ENCODE measurements at regions of chr7 and their contacts with region 1.

Region 1: GRCh38 chr7:43834463-43835251 is 34.7 kb downstream of the MRPS24 start:
- DNase-seq: peak; percentile 51
- ATAC-seq: peak; percentile 75
- H3K4me3 Mint-ChIP-seq: peak overlapping the region; percentile 82
- H3K27ac Mint-ChIP-seq: peak overlapping the region; percentile 91
- H3K4me1 Mint-ChIP-seq: peaks cover 22% of the 10 kb centered on the region
- H3K27me3 Mint-ChIP-seq: peaks cover 4% of the 10 kb centered on the region

Region 2: GRCh38 chr7:43108255-43109011 is 726.2 kb before region 1 on chr7:
- CTCF ChIA-PET with region 1: no interaction called
- POLR2A ChIA-PET with region 1: no interaction called
- DNase-seq: peak; percentile 65
- ATAC-seq: peak; percentile 82
- H3K4me3 Mint-ChIP-seq: no peak overlapping the region
- H3K27ac Mint-ChIP-seq: no peak overlapping the region
- H3K4me1 Mint-ChIP-seq: no peaks in the 10 kb centered on the region
- H3K27me3 Mint-ChIP-seq: peaks cover 43% of the 10 kb centered on the region

Region 3: GRCh38 chr7:43454936-43455518 is 379.6 kb before region 1 on chr7:
- CTCF ChIA-PET with region 1: interaction called, 13 read pairs
- POLR2A ChIA-PET with region 1: no interaction called
- DNase-seq: no peak
- ATAC-seq: peak; percentile 67
- H3K4me3 Mint-ChIP-seq: no peak overlapping the region
- H3K27ac Mint-ChIP-seq: no peak overlapping the region
- H3K4me1 Mint-ChIP-seq: peaks cover 1% of the 10 kb centered on the region
- H3K27me3 Mint-ChIP-seq: peaks cover 10% of the 10 kb centered on the region

Region 4: DNA sequence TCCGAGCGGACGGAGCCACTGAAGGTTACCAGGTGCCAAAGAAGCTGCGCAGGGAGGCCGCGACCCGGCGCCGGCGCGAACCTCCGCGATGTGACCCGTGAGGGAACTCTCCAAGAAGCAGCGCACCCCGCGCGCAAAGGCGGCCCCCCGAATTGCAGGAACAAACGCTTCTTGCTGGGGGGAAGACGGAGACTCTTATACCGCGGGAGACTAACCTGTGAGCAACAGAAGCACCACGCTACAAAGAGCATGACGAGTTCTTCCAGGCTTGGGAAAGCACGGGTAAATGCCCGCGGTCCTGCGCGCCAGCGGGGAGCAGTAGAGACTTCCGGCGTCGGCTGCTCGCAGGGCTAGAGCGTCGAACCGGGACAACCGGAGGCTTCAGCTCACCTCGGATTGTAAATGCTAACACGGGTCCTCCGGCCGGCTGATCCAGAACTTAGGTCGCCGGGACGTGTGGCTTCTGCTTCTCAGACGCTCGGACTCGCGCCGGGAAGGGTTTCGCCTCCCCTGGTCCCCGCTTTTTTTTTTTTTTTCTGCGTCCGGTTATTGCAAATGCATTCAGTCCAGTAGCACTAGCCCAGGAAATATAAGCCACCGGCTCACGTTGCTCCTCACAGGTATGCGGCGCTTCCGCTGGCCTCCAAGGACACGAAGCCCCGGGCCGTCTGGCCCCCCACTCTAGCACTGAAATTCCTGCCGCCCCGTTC is 105.3 kb before region 1 on chr7 and contains the start of gene COA1:
- CTCF ChIA-PET with region 1: interaction called, 25 read pairs
- POLR2A ChIA-PET with region 1: no interaction called
- DNase-seq: peak; percentile 83
- ATAC-seq: peak; percentile 97
- H3K4me3 Mint-ChIP-seq: peak within 1 kb of the TSS; percentile 93
- H3K27ac Mint-ChIP-seq: peak within 1 kb of the TSS; percentile 84
- H3K4me1 Mint-ChIP-seq: peaks cover 37% of the 10 kb centered on the region
- H3K27me3 Mint-ChIP-seq: peaks cover 3% of the 10 kb centered on the region
- total RNA-seq, gene COA1: 52.0 to 52.7 TPM

Region 5: GRCh38 chr7:43764039-43764761 is 70.5 kb before region 1 on chr7:
- CTCF ChIA-PET with region 1: interaction called, 11 read pairs
- POLR2A ChIA-PET with region 1: no interaction called
- DNase-seq: no peak
- ATAC-seq: peak; percentile 52
- H3K4me3 Mint-ChIP-seq: no peak overlapping the region
- H3K27ac Mint-ChIP-seq: no peak overlapping the region
- H3K4me1 Mint-ChIP-seq: peaks cover 27% of the 10 kb centered on the region
- H3K27me3 Mint-ChIP-seq: no peaks in the 10 kb centered on the region

Region 6: DNA sequence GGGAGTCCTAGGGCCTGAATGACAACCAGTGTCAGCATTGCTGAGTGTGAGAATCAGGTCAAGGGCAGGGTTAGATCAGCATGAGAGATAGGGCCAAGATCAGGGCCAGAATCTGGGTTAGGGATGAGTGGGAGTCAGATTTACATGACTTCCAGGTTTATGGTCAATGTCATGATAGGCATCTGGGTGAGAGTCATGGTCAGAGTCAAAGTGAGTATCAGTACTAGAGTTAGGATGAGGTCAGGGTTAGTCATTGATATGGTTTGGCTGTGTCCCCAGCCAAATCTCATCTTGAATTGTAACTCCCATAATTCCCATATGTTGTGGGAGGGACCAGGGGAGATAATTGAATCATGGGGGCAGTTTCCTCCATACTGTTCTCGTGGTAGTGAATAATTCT is 22.3 kb after region 1 on chr7:
- CTCF ChIA-PET with region 1: interaction called, 12 read pairs
- POLR2A ChIA-PET with region 1: no interaction called
- DNase-seq: no peak
- ATAC-seq: no peak
- H3K4me3 Mint-ChIP-seq: no peak overlapping the region
- H3K27ac Mint-ChIP-seq: no peak overlapping the region
- H3K4me1 Mint-ChIP-seq: no peaks in the 10 kb centered on the region
- H3K27me3 Mint-ChIP-seq: peaks cover 5% of the 10 kb centered on the region